ENCODE measurements at regions of chr9 and their contacts with region 1.

Region 1: GRCh38 chr9:126490871-126491567 is 122.7 kb upstream of the LMX1B start:
- DNase-seq: peak in 1 of 2 donors; percentile 88
- ATAC-seq: peak; percentile 77 to 86 (median 80)
- H3K4me3 ChIP-seq: no peak overlapping the region
- H3K4me3 Mint-ChIP-seq: peak overlapping the region; percentile 9
- H3K27ac ChIP-seq: no peak overlapping the region
- H3K27ac Mint-ChIP-seq: no peak overlapping the region
- H3K4me1 ChIP-seq: peaks cover 15% of the 10 kb centered on the region
- H3K4me1 Mint-ChIP-seq: peaks cover 6 to 9% of the 10 kb centered on the region in 2 donors
- H3K27me3 ChIP-seq: peaks cover 7% of the 10 kb centered on the region
- H3K27me3 Mint-ChIP-seq: peaks cover 0 to 6% of the 10 kb centered on the region in 2 donors
- CTCF ChIP-seq: peak; percentile 96

Region 2: DNA sequence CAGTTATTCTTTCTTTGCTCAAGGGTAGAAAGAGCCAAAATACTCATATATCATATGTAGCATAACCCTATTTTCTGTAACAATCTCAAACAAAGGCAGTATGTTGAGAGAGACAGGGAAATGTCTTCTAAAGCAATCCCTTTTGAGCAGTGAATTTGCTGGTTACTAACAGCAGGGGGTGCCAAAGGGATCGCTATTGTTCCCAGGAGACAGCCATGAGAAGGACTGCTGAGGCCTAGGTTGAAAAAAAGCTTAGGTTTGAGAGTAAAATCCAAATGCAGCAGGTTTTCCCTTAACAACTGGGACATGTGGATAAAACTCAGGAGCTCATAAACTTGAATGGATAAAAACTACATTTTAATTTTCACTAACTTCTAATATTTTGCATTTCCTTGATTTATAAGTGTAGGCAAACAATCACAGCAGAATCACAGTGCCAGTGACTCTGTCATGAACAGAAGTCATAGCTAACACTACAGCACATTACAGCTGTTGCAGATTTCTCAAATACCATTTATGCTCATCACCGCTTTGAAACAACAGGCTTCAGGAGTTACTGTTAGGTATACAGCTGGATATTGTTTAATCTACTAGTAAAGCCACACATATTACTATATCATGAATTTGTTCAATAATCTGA is 932.4 kb before region 1 on chr9:
- intact Hi-C with region 1: loop called (anchors 1 kb)
- DNase-seq: peak; percentile 25 to 77
- ATAC-seq: peak; percentile 63 to 84 (median 75)
- H3K4me3 ChIP-seq: no peak overlapping the region
- H3K4me3 Mint-ChIP-seq: no peak overlapping the region
- H3K27ac ChIP-seq: no peak overlapping the region
- H3K27ac Mint-ChIP-seq: no peak overlapping the region
- H3K4me1 ChIP-seq: no peaks in the 10 kb centered on the region
- H3K4me1 Mint-ChIP-seq: peaks cover 12 to 16% of the 10 kb centered on the region in 2 donors
- H3K27me3 ChIP-seq: no peaks in the 10 kb centered on the region
- H3K27me3 Mint-ChIP-seq: no peaks in the 10 kb centered on the region
- CTCF ChIP-seq: peak; percentile 73

Region 3: GRCh38 chr9:125574126-125574877 is 916.7 kb before region 1 on chr9:
- intact Hi-C with region 1: no loop called
- DNase-seq: no peak
- ATAC-seq: no peak
- H3K4me3 ChIP-seq: no peak overlapping the region
- H3K4me3 Mint-ChIP-seq: no peak overlapping the region
- H3K27ac ChIP-seq: no peak overlapping the region
- H3K27ac Mint-ChIP-seq: no peak overlapping the region
- H3K4me1 ChIP-seq: no peaks in the 10 kb centered on the region
- H3K4me1 Mint-ChIP-seq: peaks cover 22 to 29% of the 10 kb centered on the region in 2 donors
- H3K27me3 ChIP-seq: no peaks in the 10 kb centered on the region
- H3K27me3 Mint-ChIP-seq: no peaks in the 10 kb centered on the region
- CTCF ChIP-seq: no peak

Region 4: GRCh38 chr9:126228781-126229444 is 262.1 kb before region 1 on chr9:
- intact Hi-C with region 1: loop called (anchors 5 kb)
- DNase-seq: peak; percentile 48 to 78
- ATAC-seq: peak; percentile 82 to 97 (median 86)
- H3K4me3 ChIP-seq: no peak overlapping the region
- H3K4me3 Mint-ChIP-seq: no peak overlapping the region
- H3K27ac ChIP-seq: no peak overlapping the region
- H3K27ac Mint-ChIP-seq: no peak overlapping the region
- H3K4me1 ChIP-seq: no peaks in the 10 kb centered on the region
- H3K4me1 Mint-ChIP-seq: peaks cover 0 to 5% of the 10 kb centered on the region in 2 donors
- H3K27me3 ChIP-seq: peaks cover 2% of the 10 kb centered on the region
- H3K27me3 Mint-ChIP-seq: peaks cover 15 to 32% of the 10 kb centered on the region in 2 donors
- CTCF ChIP-seq: peak; percentile 84

Region 5: DNA sequence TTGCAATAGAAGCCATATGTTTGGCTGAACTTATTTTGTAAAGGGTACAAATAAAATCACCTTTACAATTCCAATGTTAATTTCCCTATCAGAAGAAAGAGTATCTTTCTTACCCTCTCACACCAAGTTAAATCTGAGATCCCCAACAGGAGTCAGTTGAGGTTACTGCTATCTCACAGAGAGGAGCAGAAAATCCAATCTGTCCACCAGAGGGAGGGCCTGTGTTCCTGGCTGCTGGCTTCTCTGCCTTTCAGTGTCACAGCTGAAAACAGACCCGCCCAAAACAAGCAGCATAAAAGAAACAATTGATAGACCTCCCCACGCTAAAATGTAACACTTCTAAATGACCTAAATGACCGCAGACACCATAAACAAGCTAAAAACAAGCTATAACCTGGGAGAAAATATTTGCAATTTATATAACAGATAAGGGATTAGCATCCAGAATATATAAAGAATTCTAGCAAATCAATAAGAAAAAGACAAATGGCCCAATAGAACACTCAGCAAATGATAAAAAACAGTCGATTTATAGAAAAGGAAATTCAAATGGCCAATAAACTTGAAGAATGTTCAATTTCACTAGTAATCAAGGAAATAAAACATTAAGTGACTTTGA is 188.9 kb before region 1 on chr9:
- intact Hi-C with region 1: loop called (anchors 1 kb)
- DNase-seq: peak in 1 of 2 donors; percentile 80
- ATAC-seq: peak; percentile 57 to 72 (median 58)
- H3K4me3 ChIP-seq: no peak overlapping the region
- H3K4me3 Mint-ChIP-seq: no peak overlapping the region
- H3K27ac ChIP-seq: no peak overlapping the region
- H3K27ac Mint-ChIP-seq: no peak overlapping the region
- H3K4me1 ChIP-seq: no peaks in the 10 kb centered on the region
- H3K4me1 Mint-ChIP-seq: peaks cover 0 to 6% of the 10 kb centered on the region in 2 donors
- H3K27me3 ChIP-seq: no peaks in the 10 kb centered on the region
- H3K27me3 Mint-ChIP-seq: peaks cover 0 to 3% of the 10 kb centered on the region in 2 donors
- CTCF ChIP-seq: peak; percentile 38

Region 6: DNA sequence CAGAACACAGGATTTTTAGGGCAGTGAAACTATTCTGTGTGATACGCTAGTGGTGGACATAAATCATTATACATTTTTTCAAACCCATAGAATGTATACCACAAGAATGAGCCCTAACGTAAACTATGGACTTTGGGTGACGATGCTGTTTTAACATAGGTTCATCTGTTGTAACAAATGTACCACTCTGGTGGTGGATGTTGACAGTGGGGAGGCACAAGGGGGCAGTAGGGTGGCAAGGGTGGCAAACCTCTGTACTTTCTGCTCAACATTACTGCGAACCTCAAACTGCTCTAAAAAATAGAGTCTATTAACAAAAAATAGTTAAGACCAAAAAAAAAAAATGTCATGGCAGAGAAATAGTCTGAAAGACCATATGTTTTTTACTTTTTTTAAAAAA is 173.5 kb before region 1 on chr9:
- intact Hi-C with region 1: loop called (anchors 2 kb)
- DNase-seq: peak in 1 of 2 donors; percentile 75
- ATAC-seq: peak in 2 of 3 donors; percentile 59 to 67
- H3K4me3 ChIP-seq: no peak overlapping the region
- H3K4me3 Mint-ChIP-seq: no peak overlapping the region
- H3K27ac ChIP-seq: no peak overlapping the region
- H3K27ac Mint-ChIP-seq: no peak overlapping the region
- H3K4me1 ChIP-seq: no peaks in the 10 kb centered on the region
- H3K4me1 Mint-ChIP-seq: no peaks in the 10 kb centered on the region
- H3K27me3 ChIP-seq: no peaks in the 10 kb centered on the region
- H3K27me3 Mint-ChIP-seq: peaks cover 0 to 4% of the 10 kb centered on the region in 2 donors
- CTCF ChIP-seq: peak; percentile 23

Region 7: GRCh38 chr9:126398403-126399058 is 92.5 kb before region 1 on chr9:
- intact Hi-C with region 1: loop called (anchors 1 kb)
- DNase-seq: peak; percentile 73 to 85
- ATAC-seq: peak; percentile 59 to 75 (median 73)
- H3K4me3 ChIP-seq: no peak overlapping the region
- H3K4me3 Mint-ChIP-seq: no peak overlapping the region
- H3K27ac ChIP-seq: no peak overlapping the region
- H3K27ac Mint-ChIP-seq: no peak overlapping the region
- H3K4me1 ChIP-seq: peaks cover 26% of the 10 kb centered on the region
- H3K4me1 Mint-ChIP-seq: peaks cover 5 to 15% of the 10 kb centered on the region in 2 donors
- H3K27me3 ChIP-seq: no peaks in the 10 kb centered on the region
- H3K27me3 Mint-ChIP-seq: peaks cover 0 to 8% of the 10 kb centered on the region in 2 donors
- CTCF ChIP-seq: peak; percentile 98